ENCODE measurements at regions of chr5 and their contacts with region 1.

Region 1: DNA sequence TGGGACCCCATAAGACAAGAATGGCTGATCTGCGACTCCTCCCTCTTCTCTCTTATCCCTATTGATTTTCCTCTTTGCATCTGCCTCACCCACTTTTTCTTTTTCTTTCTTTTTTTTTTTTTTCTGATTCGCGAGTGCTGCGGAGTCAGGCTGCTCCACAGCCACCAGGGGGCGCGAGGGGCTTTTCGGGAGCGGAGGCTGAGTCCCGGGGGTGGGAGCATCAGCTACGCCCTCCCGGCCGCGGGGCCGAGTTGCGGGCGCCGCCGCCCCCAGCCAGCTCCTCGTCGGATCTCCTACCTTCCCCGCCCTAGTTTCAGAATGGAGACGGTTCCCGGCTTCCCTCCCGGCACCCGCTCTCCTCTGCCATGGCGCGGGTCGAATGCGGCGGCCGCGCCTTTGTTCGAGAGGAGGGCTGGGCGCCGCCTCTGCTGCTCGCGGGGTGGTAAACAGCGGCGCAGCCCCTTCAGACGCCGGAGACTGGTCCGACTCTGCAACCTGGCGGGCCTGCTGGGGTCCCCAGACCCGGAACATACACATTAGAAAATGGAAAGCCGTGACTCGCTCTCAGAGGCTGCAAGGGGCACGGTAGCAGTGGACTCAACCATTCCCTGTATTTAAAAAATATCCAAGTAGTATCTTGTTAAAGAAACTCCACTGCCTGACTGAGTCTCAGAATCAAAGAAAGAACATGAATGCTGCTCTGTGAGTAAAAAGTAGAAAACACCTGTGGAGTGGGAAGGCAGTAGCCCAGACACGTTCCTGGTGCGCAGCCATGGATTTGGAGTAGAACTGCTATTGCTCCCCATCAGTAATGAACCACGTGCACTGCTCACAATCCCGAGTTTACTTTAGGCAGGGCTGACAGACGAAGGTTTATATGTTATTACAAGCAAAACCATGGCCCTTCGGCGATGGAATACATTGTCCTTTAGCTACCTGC is 55.7 kb downstream of the DPYSL3 start:
- DNase-seq: peak; percentile 90

Region 2: DNA sequence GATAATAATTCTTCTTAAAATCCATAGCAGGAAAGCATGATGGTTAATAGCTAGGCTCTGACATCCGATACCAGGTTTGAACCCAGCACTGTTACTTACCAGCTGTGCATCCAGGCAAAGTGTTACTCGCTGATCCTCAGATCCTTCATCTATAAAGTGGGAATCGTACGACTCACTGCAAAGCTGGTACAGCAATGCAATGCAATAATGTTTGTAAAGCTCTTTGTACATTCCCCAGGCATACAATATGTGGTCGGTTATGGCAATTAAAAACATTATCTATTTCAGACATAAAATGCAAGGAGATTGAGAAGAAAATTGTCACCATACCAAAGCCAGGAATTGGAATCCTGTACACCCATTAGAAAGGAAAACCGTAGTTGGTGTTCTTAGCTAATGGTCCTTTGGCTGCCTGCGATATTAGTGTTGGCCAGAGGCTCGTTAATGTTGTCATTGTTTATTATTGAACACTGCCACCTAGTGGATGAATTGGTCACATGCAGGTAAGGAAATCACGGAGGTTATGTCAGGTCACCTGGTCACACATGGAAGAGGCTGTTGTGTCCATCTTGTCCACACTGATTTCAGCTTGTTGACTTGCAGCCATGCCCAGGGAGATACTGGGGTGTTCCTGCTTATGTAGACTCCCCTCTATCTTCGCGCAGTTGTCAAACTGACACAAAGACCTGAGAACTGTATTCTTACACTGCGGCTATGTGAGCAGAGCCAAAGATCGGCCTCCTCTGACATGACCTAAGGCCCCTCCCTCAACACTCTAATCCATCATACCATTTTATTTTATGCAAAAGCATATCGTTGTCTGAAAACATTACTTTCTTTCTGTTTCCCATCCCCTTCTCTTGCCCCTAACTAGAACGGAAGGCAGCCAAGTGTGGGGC is 488.1 kb before region 1 on chr5:
- intact Hi-C with region 1: no loop called
- DNase-seq: no peak

Region 3: GRCh38 chr5:147223948-147224791 is 230.0 kb before region 1 on chr5:
- intact Hi-C with region 1: loop called (anchors 10 kb)
- DNase-seq: no peak

Region 4: GRCh38 chr5:147404706-147405105 is 49.4 kb before region 1 on chr5:
- intact Hi-C with region 1: loop called (anchors 5 kb)
- DNase-seq: no peak

Region 5: GRCh38 chr5:147509710-147510651 is 55.8 kb after region 1 on chr5 and contains the start of gene DPYSL3:
- intact Hi-C with region 1: loop called (anchors 5 kb)
- DNase-seq: peak; percentile 83
- total RNA-seq, gene DPYSL3: 51.1 TPM

Region 6: DNA sequence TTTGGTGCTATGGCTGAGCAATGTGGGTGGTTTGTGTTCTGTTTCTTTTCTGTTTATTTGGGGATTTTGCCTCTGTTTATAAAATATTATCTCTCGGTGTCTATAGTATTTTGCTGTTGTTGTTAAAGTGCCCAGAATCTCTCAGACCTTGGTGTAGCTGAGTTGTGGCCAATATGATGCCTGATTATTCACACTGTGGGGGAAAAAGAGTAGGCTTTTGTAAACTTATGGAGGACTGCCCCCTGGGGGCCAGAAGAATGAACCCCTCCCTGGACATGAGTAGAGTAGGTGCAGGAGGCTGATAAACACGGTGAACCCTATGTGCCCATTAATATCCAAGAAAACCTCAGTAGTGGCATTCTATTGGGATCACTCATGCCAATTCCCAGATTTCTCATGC is 104.7 kb after region 1 on chr5:
- intact Hi-C with region 1: loop called (anchors 1 kb)
- DNase-seq: no peak

Region 7: DNA sequence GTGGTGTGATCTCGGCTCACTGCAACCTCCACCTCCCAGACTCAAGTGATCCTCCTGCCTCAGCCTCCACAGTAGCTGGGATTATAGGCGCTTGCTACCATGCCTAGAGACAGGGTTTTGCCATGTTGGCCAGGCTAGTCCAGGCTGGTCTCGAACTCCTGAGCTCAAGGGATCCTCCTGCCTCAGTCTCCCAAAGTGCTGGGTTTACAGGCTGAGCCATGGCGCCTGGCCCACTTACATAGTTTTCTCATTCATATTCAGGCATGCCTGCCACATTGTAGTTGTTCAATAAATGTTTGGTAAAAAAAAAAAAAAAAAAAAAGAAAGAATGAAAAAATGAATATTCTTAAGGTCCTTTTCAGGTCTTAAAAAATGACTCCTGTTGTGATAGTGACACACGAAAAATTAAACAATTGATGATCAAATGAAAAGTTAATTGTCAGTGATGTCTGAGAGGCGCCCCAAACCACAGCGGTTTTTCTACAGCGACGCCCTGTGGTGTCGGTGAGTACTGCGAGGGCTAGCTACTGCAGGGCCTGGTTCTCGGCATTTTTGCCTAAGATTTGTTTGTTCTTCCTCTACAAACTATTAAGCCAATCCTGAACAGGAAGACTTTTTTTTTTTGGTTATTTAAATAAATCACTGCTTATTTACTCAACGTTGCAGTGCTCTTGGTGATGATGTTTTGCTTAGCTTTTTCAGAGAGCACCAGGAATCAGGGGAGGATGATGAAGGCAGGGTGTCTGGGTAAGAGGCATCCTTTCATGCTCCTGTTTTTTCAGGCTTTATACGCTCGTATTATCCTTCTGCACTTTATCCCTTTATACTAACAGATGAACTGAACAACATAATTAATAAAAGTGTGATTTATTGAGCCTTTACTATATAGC is 122.7 kb after region 1 on chr5:
- intact Hi-C with region 1: loop called (anchors 5 kb)
- DNase-seq: no peak